GM18951 (cell line): ENCODE measurements at regions of chr14 and their contacts with region 1.

Region 1: GRCh38 chr14:75560962-75561432 is 17.4 kb upstream of the FLVCR2 start:
- POLR2A ChIP-seq: no peak

Region 2: DNA sequence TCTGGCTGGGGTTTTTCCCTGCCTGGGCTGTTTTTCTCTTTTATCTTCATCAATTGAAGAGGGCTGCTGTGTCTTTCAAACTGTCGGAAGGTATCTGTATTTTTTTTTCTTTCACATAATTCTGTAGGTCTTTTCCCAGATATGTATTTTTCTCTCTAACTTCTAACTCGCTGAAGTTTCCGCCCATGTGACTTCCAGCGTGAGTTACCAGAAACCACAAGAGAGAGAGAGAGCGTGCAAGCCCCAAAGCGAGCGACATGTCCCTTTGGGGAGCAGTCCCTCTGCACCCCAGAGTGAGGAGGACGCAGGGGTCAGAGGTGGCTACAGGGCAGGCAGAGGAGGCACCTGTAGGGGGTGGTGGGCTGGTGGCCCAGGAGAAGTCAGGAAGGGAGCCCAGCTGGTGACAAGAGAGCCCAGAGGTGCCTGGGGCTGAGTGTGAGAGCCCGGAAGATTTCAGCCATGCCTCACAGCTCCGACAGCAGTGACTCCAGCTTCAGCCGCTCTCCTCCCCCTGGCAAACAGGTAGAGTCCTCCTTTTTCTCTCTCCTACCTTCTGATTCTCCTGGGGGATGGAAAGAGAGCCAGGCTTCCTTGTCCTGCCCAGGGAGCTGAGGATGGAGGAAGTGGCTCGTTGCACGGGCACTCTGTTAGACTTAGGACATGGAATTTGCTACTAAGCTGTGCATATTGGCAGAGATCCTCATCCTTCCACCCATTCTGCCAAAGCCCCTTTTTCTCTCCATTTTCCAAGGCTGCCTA is 38.6 kb before region 1 on chr14 and contains the start of gene BATF:
- in situ Hi-C with region 1: loop called (anchors 5 kb)
- POLR2A ChIP-seq: peak; percentile 94

Region 3: DNA sequence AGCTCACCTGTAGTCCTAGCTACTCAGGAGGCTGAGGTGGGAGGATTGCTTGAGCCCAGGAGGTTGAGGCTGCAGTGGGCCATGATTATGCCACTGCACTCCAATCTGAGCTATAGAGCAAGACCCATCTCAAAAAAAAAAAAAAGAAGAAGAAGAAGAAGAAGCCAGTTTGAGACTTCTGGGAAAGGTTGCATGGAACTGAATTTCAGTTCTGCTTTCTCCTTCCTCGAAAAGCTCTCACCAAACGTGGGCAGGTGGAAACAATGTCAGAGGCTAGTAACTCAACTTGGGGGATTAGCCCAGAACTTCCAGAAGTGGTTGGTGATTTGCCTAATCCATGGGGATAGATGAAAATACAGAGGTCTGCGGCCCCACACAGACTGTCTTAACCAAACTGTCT is 36.2 kb after region 1 on chr14:
- in situ Hi-C with region 1: no loop called
- POLR2A ChIP-seq: no peak